ENCODE measurements at regions of chr22 and their contacts with region 1.

Region 1: GRCh38 chr22:33302049-33302545 is 243.9 kb upstream of the SYN3 start:
- DNase-seq: peak; percentile 74
- H3K4me3 ChIP-seq: no peak overlapping the region
- H3K27ac ChIP-seq: no peak overlapping the region
- H3K4me1 ChIP-seq: peaks cover 8% of the 10 kb centered on the region
- H3K27me3 ChIP-seq: no peaks in the 10 kb centered on the region
- CTCF ChIP-seq: peak; percentile 60 to 89 (median 84)
- POLR2A ChIP-seq: no peak

Region 2: GRCh38 chr22:33389936-33390335 is 87.8 kb after region 1 on chr22:
- intact Hi-C with region 1: no loop called
- DNase-seq: no peak
- H3K4me3 ChIP-seq: no peak overlapping the region
- H3K27ac ChIP-seq: no peak overlapping the region
- H3K4me1 ChIP-seq: no peaks in the 10 kb centered on the region
- H3K27me3 ChIP-seq: no peaks in the 10 kb centered on the region
- CTCF ChIP-seq: no peak
- POLR2A ChIP-seq: no peak

Region 3: GRCh38 chr22:33472462-33473344 is 170.6 kb after region 1 on chr22:
- intact Hi-C with region 1: no loop called
- DNase-seq: no peak
- H3K4me3 ChIP-seq: no peak overlapping the region
- H3K27ac ChIP-seq: no peak overlapping the region
- H3K4me1 ChIP-seq: no peaks in the 10 kb centered on the region
- H3K27me3 ChIP-seq: no peaks in the 10 kb centered on the region
- CTCF ChIP-seq: no peak
- POLR2A ChIP-seq: no peak

Region 4: GRCh38 chr22:33519071-33519973 is 217.2 kb after region 1 on chr22:
- intact Hi-C with region 1: loop called (anchors 10 kb)
- DNase-seq: peak; percentile 56
- H3K4me3 ChIP-seq: no peak overlapping the region
- H3K27ac ChIP-seq: no peak overlapping the region
- H3K4me1 ChIP-seq: no peaks in the 10 kb centered on the region
- H3K27me3 ChIP-seq: no peaks in the 10 kb centered on the region
- CTCF ChIP-seq: peak; percentile 15 to 69 (median 60)
- POLR2A ChIP-seq: no peak

Region 5: DNA sequence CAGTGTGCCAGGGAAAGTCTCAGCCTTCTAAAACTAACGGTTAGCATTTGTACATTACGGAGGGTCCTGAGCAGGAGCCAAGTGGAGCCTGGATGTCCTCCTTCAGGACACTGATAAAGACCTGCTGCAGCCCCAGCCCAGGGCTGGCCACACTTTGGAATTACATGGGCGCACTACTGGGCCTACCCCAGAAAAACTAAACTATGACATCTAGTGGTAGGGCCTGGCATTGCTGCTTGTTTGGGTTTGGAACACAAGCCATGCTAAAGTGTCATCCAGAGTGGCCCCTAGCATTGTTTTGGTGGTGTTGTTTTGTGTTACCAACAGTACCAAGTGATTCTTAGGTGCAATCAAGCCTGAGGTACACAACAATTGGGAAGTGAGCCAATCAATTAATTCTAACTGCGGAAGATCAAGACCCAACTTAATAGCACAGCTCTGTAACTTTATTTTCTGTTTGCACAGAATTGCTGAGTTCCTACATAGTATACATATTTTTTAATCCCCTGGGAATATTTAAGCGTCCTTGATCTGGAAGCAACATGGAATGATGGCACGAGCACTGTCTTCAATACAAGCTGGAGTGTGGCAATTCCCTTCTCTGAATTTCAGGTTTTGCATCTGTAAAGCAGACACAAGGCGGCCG is 277.5 kb after region 1 on chr22:
- intact Hi-C with region 1: loop called (anchors 2 kb)
- DNase-seq: peak; percentile 50
- H3K4me3 ChIP-seq: no peak overlapping the region
- H3K27ac ChIP-seq: no peak overlapping the region
- H3K4me1 ChIP-seq: no peaks in the 10 kb centered on the region
- H3K27me3 ChIP-seq: no peaks in the 10 kb centered on the region
- CTCF ChIP-seq: peak; percentile 52 to 83 (median 82)
- POLR2A ChIP-seq: no peak

Region 6: DNA sequence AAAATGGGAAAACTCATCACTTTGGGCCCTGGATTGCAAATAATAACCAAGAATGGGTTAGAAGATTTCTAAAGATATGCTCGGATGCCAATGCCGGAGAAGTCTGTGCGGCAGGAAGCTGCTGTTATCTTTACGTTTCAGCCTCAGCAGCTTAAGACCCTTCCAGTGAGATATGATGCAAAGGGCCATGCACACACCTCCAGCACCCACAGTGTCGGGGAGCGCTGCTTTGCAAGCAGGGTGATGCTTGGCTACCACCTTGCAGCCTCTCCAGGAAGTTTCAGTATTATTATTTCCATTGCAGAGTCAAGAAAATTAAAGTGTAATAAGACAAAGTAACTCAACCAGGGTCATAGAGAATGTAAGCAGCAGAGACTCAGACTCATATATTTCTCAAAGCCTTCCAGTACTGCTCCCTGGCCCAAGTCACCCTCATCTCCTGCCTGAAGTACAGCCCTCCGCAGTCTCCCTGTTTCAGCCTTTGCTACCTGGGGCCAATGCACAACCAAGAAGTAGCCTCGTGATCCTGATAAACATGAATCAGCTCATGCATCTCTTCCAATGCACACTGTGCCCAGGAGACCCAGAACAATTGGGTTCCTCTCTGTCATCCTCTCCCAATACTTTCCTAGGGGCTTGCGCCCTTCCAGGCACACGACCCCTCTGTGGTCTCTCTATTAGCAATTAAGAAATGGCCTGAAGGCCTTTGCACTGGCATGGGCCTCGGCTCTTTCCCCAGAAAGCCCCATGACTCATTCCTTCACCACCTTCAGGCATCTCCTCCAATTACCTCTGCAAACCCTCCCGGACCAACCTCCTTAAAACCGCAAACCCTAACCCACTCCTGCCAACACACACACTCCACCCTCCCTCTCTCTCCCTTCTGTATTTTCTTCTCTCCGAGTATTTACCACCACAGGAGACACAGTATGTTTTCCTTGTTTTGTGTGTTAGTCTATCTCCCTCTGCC is 581.2 kb after region 1 on chr22:
- intact Hi-C with region 1: no loop called
- DNase-seq: no peak
- H3K4me3 ChIP-seq: no peak overlapping the region
- H3K27ac ChIP-seq: no peak overlapping the region
- H3K4me1 ChIP-seq: peaks cover 3% of the 10 kb centered on the region
- H3K27me3 ChIP-seq: no peaks in the 10 kb centered on the region
- CTCF ChIP-seq: no peak
- POLR2A ChIP-seq: no peak

Region 7: DNA sequence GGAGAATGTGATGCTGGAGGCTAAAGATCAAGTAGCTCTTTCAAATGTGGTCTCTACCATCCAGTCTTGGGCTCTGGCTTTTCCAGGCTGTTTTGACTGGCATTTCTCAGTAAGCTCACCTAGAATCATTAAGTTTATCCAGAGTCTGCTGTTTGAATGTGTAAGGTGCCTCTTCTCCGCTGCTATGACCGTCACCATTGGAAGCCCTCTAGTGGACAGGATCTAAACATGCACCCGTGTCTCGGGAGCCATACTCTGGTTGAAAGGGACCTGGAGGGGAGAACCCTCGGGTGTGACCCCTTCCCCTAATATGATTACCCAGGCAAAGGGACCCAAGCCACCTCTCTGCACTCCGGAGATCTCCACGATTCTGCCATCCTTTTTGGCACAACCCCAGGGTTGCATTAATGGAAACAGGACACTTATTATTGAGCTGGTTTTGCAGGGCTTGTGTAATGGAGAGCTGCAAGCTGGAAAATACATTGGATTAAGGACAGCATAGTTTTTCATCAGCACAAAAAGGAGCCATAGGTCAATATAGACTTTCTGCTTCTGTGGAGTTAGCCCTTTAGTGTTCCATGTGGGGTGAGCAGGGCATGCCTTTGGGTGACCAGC is 809.2 kb after region 1 on chr22:
- intact Hi-C with region 1: loop called (anchors 5 kb)
- DNase-seq: no peak
- H3K4me3 ChIP-seq: no peak overlapping the region
- H3K27ac ChIP-seq: no peak overlapping the region
- H3K4me1 ChIP-seq: no peaks in the 10 kb centered on the region
- H3K27me3 ChIP-seq: no peaks in the 10 kb centered on the region
- CTCF ChIP-seq: peak; percentile 23 to 56 (median 46)
- POLR2A ChIP-seq: no peak

Measured in prostate gland (tissue), 2 donors.